ENCODE measurements at regions of chr19 and their contacts with region 1.

Region 1: DNA sequence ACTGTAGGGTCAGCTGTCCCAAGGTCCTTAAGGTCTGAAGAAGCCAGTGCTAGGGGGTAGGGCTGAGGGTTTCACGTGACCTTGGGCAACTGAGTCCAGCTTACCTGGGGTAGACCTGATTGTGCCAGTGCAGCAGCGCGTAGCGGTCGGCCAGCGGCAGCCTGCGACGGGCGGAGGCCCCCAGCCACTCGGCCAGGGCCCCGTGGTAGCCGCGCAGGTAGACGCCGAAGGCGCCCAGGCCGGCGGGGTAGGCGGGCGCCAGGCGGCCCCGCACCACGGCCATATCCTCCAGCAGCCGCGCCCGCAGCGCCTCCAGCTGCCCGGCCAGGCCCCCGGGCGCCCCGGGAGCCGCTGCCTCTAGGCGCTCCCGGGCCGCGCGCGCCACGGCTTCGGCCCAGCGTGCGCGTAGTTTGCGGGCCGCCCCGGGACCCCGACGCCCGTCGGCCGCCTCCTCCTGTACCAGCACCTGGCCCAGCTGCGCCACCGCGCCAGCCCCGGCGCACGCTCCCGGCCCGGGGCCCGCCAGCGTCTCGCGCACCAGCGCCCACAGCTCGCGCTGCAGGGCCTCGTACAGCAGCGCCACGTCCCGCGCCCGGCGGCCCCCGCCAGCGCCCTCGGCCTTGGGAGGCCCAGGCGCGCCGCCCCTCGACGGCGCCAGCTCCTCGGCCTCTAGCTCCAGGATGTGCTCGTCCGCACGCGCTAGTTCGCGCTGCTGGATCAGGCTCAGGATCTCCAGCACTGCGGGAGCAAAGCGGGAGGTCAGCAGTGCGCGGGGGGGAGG is 10.9 kb downstream of the EXOC3L2 start:
- DNase-seq: peak in 1 of 2 experiments; percentile 77
- H3K4me3 ChIP-seq: peak overlapping the region; percentile 12 to 58 (median 26)
- H3K27ac ChIP-seq: no peak overlapping the region
- H3K4me1 ChIP-seq: peaks cover 0 to 8% (median 5%) of the 10 kb centered on the region in 4 experiments; a peak in 4 of 7 replicates
- H3K27me3 ChIP-seq: peaks cover 26 to 48% (median 44%) of the 10 kb centered on the region in 4 experiments
- CTCF ChIP-seq: no peak
- EP300 ChIP-seq: no peak
- POLR2A ChIP-seq: no peak
- RAD21 ChIP-seq: no peak

Region 2: GRCh38 chr19:45215383-45216191 is 18.7 kb before region 1 on chr19:
- CTCF ChIA-PET with region 1: interaction called, 14 read pairs
- POLR2A ChIA-PET with region 1: interaction called, 8 read pairs
- DNase-seq: peak in 1 of 2 experiments; percentile 72
- H3K4me3 ChIP-seq: peak overlapping the region; percentile 15 to 63 (median 40); a peak in 7 of 8 replicates
- H3K27ac ChIP-seq: no peak overlapping the region
- H3K4me1 ChIP-seq: peaks cover 0 to 16% (median 10%) of the 10 kb centered on the region in 4 experiments; a peak in 5 of 7 replicates
- H3K27me3 ChIP-seq: peaks cover 14 to 44% (median 36%) of the 10 kb centered on the region in 4 experiments
- CTCF ChIP-seq: no peak
- EP300 ChIP-seq: no peak
- POLR2A ChIP-seq: no peak
- RAD21 ChIP-seq: no peak

Region 3: DNA sequence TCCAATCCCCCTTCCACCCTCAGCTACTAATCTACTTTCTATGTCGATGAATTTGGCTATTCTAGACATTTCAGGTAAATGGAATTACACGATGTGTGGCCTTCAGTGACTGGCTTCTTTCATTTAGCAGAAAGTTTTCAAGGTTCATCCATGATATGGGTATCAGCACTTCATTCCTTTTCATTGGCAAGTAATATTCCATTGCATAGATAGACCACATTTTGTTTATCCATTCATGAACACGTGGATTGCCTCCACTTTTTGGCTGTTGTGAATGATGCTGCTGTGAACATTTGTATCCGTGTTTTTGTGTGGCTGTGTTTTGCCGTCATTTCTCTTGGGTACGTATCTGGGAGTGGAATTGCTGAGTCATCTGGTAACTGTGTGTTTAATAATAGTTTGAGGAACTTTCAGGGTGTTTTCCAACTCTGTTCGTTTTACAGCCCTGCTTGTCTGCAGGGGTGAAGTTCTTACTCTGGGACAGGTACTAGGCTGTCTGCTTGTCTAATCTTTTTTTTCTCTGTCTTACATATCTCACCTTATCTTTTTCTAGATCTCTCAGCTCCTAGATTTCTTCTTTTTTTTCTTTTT is 49.3 kb after region 1 on chr19:
- CTCF ChIA-PET with region 1: no interaction called
- POLR2A ChIA-PET with region 1: no interaction called
- DNase-seq: no peak
- H3K4me3 ChIP-seq: no peak overlapping the region
- H3K27ac ChIP-seq: no peak overlapping the region
- H3K4me1 ChIP-seq: no peaks in the 10 kb centered on the region
- H3K27me3 ChIP-seq: no peaks in the 10 kb centered on the region
- CTCF ChIP-seq: no peak
- EP300 ChIP-seq: no peak
- POLR2A ChIP-seq: no peak
- RAD21 ChIP-seq: no peak